Activated CD4-positive, alpha-beta memory T cell treated with anti-CD3 and anti-CD28 coated beads for 36 hours (primary cell): ENCODE measurements at regions of chr3 and their contacts with region 1.

Region 1: DNA sequence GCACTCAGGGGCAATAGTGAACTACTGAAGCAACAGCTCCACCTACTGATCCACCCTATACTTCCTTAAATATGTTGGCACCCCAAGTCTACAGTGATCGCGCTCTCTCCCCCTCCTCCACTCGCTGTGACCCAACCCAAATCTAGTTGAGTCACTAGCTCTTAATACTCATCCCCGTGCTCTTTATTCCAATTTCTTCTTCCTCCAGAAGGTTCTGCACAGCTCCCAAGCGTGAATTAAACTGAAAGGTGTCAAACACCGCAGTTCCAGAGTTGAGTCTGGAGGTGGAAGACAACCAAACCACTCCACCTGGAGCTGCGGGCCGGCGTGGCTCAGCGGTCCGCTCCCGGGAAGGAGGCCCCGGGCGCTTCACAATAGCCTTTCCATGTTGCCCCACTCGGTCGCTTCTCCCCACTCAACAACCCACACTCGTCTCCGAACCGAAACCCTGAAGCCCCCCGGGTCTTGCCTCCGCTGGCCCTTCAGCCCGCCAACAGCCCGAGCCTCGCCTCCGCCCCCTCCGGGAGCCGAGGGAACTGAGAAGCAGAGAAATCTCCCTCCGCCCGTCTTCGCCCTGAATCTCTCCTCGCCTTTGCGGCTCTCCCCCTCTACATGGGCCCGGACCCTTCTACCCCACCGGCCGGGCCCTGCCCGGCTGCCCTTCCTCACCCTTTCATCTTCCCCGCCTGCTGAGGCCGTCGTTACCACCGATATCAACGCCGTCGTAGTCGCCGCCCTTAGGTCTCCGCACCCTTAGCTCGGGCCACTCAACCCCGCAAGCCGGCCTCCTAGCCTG is 578 bp downstream of the NAA50 start:
- DNase-seq: peak; percentile 89
- H3K4me3 Mint-ChIP-seq: peak overlapping the region; percentile 91
- H3K27ac Mint-ChIP-seq: peak overlapping the region; percentile 100
- H3K4me1 Mint-ChIP-seq: peaks cover 64% of the 10 kb centered on the region
- H3K27me3 Mint-ChIP-seq: no peaks in the 10 kb centered on the region

Region 2: DNA sequence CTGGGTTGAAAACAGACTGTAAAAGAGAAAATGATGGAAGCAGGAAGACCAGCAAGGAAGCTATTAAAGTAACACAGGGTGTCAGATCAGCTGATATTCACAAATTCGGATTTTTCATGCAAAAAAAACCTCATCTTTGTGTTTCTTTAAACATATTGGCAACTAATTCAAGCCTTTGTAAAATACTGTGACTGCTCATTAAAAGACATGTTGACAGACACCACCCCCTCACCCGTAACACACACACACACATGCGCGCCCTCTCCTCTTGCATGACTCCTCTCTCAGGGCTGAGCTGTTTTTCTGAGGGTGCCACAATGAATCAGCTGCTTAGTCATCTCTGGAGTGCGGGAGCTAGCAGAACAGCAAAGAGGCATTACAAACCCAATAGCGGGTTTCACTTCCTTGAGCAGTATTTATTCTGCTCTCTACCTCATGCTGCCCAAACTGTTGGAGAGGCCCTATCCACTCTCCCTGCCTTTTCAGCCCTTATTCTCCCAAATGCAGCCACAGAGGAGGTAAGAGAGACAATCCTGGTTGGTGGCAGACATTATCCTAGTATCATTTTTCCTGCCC is 1068.7 kb before region 1 on chr3:
- CTCF ChIA-PET with region 1: no interaction called
- POLR2A ChIA-PET with region 1: no interaction called
- intact Hi-C with region 1: loop called (anchors 5 kb)
- DNase-seq: peak; percentile 96
- H3K4me3 Mint-ChIP-seq: peak overlapping the region; percentile 14
- H3K27ac Mint-ChIP-seq: peak overlapping the region; percentile 14
- H3K4me1 Mint-ChIP-seq: peaks cover 52% of the 10 kb centered on the region
- H3K27me3 Mint-ChIP-seq: peaks cover 14% of the 10 kb centered on the region

Region 3: DNA sequence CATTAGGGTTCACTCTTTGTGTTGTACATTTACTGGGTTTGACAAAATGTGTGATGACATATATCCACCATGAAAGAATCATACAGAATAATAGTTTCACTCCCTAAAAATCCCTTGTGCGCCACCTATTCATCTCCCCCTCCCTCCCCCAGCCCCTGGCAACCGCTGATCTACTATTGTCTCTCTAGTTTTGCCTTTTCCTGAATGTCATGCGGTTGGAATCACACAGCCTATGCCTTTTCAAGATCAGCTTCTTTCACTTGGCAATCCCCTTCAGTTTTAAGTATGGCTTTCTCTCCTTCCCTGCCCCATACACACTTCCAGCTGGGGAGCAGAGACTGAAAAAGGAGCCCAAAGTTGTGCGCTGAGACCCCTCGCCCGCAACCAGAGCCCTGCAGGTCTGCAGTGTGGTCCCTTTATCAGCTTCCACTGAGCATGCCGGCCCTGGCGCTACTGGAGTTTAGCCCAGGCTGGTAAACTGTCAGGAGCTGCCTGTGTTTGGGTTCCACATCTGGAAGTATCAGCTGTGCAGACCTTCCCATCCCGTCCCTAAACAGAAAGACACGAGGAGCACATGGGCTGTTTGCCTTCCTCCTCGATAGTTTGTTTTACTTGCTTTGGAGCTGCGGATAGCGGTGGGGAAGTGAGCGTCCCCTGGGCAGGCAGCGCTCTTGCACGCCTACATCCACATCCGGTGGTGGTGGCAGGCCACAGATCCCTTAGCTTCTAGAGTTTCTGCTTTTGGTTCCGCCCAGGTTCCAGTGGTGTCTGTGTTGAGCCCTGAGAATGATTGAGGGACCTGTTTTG is 521.8 kb before region 1 on chr3:
- CTCF ChIA-PET with region 1: no interaction called
- POLR2A ChIA-PET with region 1: no interaction called
- intact Hi-C with region 1: no loop called
- DNase-seq: peak; percentile 57
- H3K4me3 Mint-ChIP-seq: no peak overlapping the region
- H3K27ac Mint-ChIP-seq: no peak overlapping the region
- H3K4me1 Mint-ChIP-seq: peaks cover 8% of the 10 kb centered on the region
- H3K27me3 Mint-ChIP-seq: peaks cover 17% of the 10 kb centered on the region

Region 4: GRCh38 chr3:113531826-113532697 is 213.4 kb before region 1 on chr3 and contains the start of gene SIDT1:
- CTCF ChIA-PET with region 1: no interaction called
- POLR2A ChIA-PET with region 1: no interaction called
- intact Hi-C with region 1: loop called (anchors 1 kb)
- DNase-seq: peak; percentile 79
- H3K4me3 Mint-ChIP-seq: peak within 1 kb of the TSS; percentile 98
- H3K27ac Mint-ChIP-seq: peak within 1 kb of the TSS; percentile 96
- H3K4me1 Mint-ChIP-seq: peaks cover 45% of the 10 kb centered on the region
- H3K27me3 Mint-ChIP-seq: peaks cover 1% of the 10 kb centered on the region
- total RNA-seq, gene SIDT1: 11.3 TPM

Region 5: DNA sequence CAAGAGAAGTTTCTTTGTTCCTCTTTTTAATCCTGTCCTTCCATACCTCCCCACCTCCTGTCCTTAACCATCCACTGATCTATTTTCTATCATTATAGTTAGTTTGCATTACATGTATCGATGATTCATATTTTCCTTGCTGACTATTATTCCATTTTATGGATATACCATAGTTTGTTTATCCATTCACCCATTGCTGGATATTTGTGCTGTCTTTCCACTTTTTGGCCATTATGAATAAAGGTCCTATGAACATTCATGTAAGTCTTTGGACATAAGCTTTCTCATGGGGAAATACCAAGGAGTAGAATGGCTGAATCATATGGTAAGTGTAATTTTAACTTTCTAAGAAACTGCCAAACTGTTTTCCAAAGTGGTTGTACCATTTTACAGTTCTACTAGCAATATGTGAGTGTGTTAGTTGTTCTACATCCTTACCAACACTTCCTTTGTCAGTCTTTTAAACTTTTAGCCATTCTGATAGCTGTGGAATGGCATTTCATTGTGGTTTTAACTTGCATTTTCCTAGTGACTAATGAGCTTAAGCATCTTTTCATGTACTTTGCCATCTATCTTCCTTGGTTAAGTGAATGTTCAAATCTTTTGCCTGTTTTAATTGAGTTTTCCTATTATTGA is 13.0 kb after region 1 on chr3:
- CTCF ChIA-PET with region 1: interaction called, 12 read pairs
- POLR2A ChIA-PET with region 1: interaction called, 3 read pairs
- intact Hi-C with region 1: no loop called
- DNase-seq: no peak
- H3K4me3 Mint-ChIP-seq: no peak overlapping the region
- H3K27ac Mint-ChIP-seq: no peak overlapping the region
- H3K4me1 Mint-ChIP-seq: peaks cover 8% of the 10 kb centered on the region
- H3K27me3 Mint-ChIP-seq: no peaks in the 10 kb centered on the region

Region 6: DNA sequence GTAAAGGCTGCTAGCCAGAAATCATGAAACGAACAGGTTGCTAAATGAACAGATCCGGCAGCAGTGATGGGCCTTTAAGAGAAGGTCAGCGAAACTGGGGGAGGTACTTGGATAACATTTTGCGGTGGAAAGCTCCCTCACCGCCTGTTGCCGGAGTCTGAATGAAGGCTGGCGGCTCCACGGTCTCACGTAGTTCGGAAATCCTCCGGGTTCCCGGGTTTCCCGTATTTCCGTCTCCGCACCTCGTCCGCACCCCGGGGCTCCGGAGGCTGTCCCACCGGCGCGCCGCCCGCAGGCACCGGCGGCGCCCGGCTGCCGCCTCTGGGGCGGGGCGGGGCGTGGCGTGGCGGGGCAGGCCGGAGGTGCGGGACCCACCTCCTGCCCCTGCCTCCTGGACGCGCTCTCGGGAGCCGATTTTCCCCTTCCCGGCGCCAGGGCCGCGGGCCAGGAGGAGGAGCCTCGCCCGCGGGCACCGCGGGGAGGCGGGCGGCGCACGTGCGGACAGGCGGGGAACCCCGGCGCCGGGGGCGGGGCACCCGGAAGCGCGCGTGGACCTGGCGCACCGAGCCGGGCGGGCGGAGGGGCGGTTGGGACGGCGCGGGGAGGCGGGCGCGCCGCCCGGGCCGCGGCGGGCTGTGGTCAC is 202.0 kb after region 1 on chr3 and contains the start of gene ZDHHC23:
- CTCF ChIA-PET with region 1: no interaction called
- POLR2A ChIA-PET with region 1: no interaction called
- intact Hi-C with region 1: loop called (anchors 2 kb)
- DNase-seq: peak; percentile 71
- H3K4me3 Mint-ChIP-seq: peak within 1 kb of the TSS; percentile 74
- H3K27ac Mint-ChIP-seq: peak within 1 kb of the TSS; percentile 52
- H3K4me1 Mint-ChIP-seq: peaks cover 12% of the 10 kb centered on the region
- H3K27me3 Mint-ChIP-seq: peaks cover 14% of the 10 kb centered on the region
- total RNA-seq, gene ZDHHC23: 5.4 to 6.6 TPM

Region 7: DNA sequence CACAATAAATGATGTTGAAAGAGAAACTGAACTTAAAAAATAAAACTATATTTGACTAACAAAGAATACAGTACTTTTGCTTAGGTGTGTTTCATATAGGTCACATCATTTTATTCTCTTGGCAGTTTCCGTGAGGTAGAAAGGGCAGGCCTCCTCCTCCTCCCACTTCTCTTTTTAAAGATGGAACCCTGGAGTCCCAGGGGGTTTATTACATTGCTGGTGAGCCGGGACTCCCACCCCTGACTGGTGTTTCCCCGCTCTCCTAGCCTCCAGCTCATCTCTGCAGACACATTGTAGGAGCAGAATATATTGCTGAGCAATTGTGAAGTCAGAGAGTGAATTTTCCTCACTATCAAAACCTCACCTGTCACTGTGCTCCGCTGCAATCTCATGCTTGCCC is 232.4 kb after region 1 on chr3:
- CTCF ChIA-PET with region 1: no interaction called
- POLR2A ChIA-PET with region 1: no interaction called
- intact Hi-C with region 1: no loop called
- DNase-seq: no peak
- H3K4me3 Mint-ChIP-seq: no peak overlapping the region
- H3K27ac Mint-ChIP-seq: no peak overlapping the region
- H3K4me1 Mint-ChIP-seq: no peaks in the 10 kb centered on the region
- H3K27me3 Mint-ChIP-seq: no peaks in the 10 kb centered on the region

Region 8: DNA sequence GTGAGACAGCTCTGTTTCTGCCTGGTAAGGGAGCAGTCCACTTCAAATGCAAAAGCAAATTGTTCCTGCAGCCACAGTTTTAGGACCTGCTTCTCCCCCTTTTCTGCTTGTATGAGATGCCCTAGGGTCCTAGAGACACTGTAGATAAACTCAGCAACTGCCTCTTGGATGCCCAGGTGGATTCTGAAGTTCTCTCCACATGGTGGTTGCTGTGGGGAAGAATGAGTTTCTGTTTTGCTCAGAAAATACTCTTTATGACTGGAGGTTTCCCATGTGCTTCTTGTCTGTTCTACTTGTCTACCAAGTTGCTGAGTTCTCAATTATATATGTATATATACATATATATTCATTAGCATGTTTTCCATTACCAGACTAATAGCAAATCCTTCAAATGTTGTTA is 497.5 kb after region 1 on chr3:
- CTCF ChIA-PET with region 1: no interaction called
- POLR2A ChIA-PET with region 1: no interaction called
- intact Hi-C with region 1: no loop called
- DNase-seq: peak; percentile 49
- H3K4me3 Mint-ChIP-seq: no peak overlapping the region
- H3K27ac Mint-ChIP-seq: no peak overlapping the region
- H3K4me1 Mint-ChIP-seq: peaks cover 22% of the 10 kb centered on the region
- H3K27me3 Mint-ChIP-seq: no peaks in the 10 kb centered on the region

Region 9: GRCh38 chr3:114418724-114419543 is 673.5 kb after region 1 on chr3:
- CTCF ChIA-PET with region 1: interaction called, 4 read pairs
- POLR2A ChIA-PET with region 1: no interaction called
- intact Hi-C with region 1: loop called (anchors 10 kb)
- DNase-seq: no peak
- H3K4me3 Mint-ChIP-seq: peak overlapping the region; percentile 54
- H3K27ac Mint-ChIP-seq: peak overlapping the region; percentile 61
- H3K4me1 Mint-ChIP-seq: peaks cover 28% of the 10 kb centered on the region
- H3K27me3 Mint-ChIP-seq: no peaks in the 10 kb centered on the region